ENCODE measurements at regions of chr3 and their contacts with region 1.

Region 1: DNA sequence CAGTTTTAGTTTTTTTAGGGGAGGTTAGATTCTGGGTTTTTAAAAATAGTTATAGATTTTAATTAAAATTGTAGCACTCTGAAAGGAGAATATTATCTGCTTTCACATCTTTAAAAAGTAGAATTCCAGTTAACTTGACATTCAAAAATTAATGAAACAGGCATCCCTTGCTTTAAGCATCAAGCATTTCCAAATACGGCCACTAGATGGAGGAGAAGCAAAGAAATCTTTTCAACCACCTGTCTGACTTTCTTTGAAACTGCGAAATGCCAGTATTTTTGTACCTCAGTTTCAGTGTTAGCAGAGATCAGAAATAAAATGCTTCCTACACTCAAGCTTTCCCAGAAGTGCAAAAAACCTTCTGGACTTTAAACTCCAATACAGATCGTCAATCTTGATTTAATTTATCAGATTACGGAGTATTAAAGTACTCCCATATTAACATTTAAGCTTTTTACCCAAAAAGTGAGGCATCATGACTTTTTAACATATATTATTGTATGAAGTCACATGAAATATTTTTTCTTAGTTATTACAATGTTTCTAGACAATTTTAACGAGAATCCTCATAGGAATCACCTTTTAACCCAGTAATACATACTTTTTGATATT is 153.3 kb downstream of the P3H2 start:
- DNase-seq: peak; percentile 56
- CTCF ChIP-seq: peak; percentile 79

Region 2: GRCh38 chr3:189981668-189982067 is 14.3 kb after region 1 on chr3:
- CTCF ChIA-PET with region 1: interaction called, 16 read pairs
- POLR2A ChIA-PET with region 1: no interaction called
- DNase-seq: no peak
- CTCF ChIP-seq: no peak

Region 3: GRCh38 chr3:190205739-190206138 is 238.4 kb after region 1 on chr3:
- CTCF ChIA-PET with region 1: interaction called, 39 read pairs
- POLR2A ChIA-PET with region 1: no interaction called
- DNase-seq: peak; percentile 46
- CTCF ChIP-seq: no peak

Region 4: GRCh38 chr3:190321789-190322603 is 354.6 kb after region 1 on chr3 and contains the start of gene CLDN1:
- CTCF ChIA-PET with region 1: interaction called, 45 read pairs
- POLR2A ChIA-PET with region 1: no interaction called
- DNase-seq: peak; percentile 83
- CTCF ChIP-seq: peak; percentile 86

Region 5: GRCh38 chr3:190424478-190425439 is 457.4 kb after region 1 on chr3:
- CTCF ChIA-PET with region 1: interaction called, 56 read pairs
- POLR2A ChIA-PET with region 1: no interaction called
- DNase-seq: peak; percentile 35
- CTCF ChIP-seq: peak; percentile 50